ENCODE measurements at regions of chr11 and their contacts with region 1.

Region 1: GRCh38 chr11:13303668-13304649 is 26.4 kb downstream of the BMAL1 start:
- DNase-seq: no peak
- ATAC-seq: peak in 1 of 2 donors; percentile 6
- H3K4me3 ChIP-seq: peak overlapping the region in 2 of 4 donors; percentile 34 to 42
- H3K27ac ChIP-seq: peak overlapping the region; percentile 84 to 92 (median 91)
- H3K4me1 ChIP-seq: peaks cover 95% of the 10 kb centered on the region in 2 donors
- H3K27me3 ChIP-seq: no peaks in the 10 kb centered on the region
- CTCF ChIP-seq: no peak
- POLR2A ChIP-seq: no peak

Region 2: GRCh38 chr11:13249996-13250395 is 54.0 kb before region 1 on chr11:
- in situ Hi-C with region 1: no loop called
- intact Hi-C with region 1: no loop called
- DNase-seq: no peak
- ATAC-seq: no peak
- H3K4me3 ChIP-seq: no peak overlapping the region
- H3K27ac ChIP-seq: no peak overlapping the region
- H3K4me1 ChIP-seq: no peaks in the 10 kb centered on the region
- H3K27me3 ChIP-seq: no peaks in the 10 kb centered on the region
- CTCF ChIP-seq: peak; percentile 12 to 39 (median 30)
- POLR2A ChIP-seq: no peak

Region 3: DNA sequence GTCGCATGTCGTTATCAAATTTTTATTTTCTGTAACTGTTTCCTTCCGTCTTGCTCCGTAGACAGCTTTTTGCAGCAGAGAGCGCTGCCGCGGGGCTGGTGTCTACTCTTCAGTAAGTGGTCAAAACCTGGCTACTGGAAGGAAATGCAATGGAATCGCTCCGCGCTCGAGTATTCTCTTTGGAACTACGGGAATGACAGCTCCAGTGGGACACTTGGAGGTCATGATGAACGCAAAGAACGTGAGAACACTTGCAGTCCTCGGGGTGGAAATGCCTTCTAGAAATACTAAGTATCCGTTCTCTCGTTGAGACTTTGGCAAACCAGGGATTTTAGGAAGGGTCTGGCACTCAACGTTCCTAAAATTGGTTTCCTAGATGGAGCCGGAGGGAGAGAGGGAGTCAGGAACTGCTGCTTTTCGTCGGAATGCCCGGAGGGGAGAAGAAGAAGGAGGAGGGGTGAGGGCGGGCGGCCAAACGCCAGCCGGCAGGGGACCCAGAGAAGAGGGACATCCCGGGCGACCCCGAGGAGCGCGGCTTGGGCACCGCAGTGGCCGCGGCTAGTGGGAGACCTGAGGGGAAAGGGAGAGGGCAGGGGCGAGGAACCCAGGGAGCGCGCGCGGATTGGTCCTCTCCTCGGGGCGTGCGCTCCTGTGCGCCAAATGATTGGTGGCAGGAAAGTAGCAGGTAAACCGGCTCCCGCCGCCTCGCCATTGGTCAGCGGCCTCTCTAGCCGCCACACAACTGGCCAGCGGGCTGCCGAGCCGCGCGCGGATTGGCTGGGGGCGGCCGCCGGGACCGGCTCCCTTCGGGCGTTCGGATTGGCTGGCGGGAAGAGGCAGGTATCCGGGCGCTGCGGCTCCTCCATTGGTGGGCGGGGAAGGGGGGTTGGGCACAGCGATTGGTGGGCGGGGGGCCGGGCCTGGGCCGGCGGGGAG is 26.9 kb before region 1 on chr11:
- in situ Hi-C with region 1: no loop called
- intact Hi-C with region 1: loop called (anchors 2 kb)
- DNase-seq: peak; percentile 99
- ATAC-seq: peak; percentile 80 to 82
- H3K4me3 ChIP-seq: peak overlapping the region; percentile 84 to 97 (median 94)
- H3K27ac ChIP-seq: peak overlapping the region; percentile 86 to 98 (median 96)
- H3K4me1 ChIP-seq: peaks cover 26 to 39% of the 10 kb centered on the region in 2 donors
- H3K27me3 ChIP-seq: no peaks in the 10 kb centered on the region
- CTCF ChIP-seq: peak in 1 of 5 experiments; percentile 37
- POLR2A ChIP-seq: peak; percentile 62 to 92

Measured in gastrocnemius medialis (tissue), 4 donors.